ENCODE measurements at regions of chrX and their contacts with region 1.

Region 1: GRCh38 chrX:1925053-1925481 is 310.2 kb downstream of the ASMT start:
- DNase-seq: no peak
- H3K4me3 ChIP-seq: no peak overlapping the region
- H3K27ac ChIP-seq: no peak overlapping the region
- H3K4me1 ChIP-seq: no peaks in the 10 kb centered on the region
- H3K27me3 ChIP-seq: no peaks in the 10 kb centered on the region
- CTCF ChIP-seq: no peak
- POLR2A ChIP-seq: no peak

Region 2: GRCh38 chrX:1580735-1581531 is 344.1 kb before region 1 on chrX:
- intact Hi-C with region 1: no loop called
- DNase-seq: no peak
- H3K4me3 ChIP-seq: no peak overlapping the region
- H3K27ac ChIP-seq: no peak overlapping the region
- H3K4me1 ChIP-seq: no peaks in the 10 kb centered on the region
- H3K27me3 ChIP-seq: peaks cover 0 to 3% of the 10 kb centered on the region in 2 donors
- CTCF ChIP-seq: peak; percentile 29 to 52 (median 36)
- POLR2A ChIP-seq: no peak

Region 3: DNA sequence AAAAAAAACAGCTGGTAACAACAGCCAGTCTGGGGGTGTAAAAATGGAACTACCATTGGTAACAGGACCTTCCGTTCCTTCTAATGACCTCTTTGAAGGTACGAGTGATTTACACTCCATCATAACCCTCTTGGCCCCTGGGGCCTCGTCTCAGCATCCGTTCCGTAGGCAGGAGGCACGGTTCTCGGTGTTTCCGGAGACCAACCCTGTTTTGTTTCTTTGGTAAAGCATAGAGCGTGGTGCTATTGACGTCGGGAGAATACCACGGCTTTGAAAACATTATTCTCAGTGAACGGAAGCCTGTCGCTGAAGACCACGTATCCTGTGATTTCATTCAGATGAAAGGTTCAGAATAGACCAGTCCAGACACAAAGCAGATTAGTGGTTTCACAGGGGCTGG is 111.3 kb before region 1 on chrX:
- intact Hi-C with region 1: loop called (anchors 5 kb)
- DNase-seq: no peak
- H3K4me3 ChIP-seq: no peak overlapping the region
- H3K27ac ChIP-seq: no peak overlapping the region
- H3K4me1 ChIP-seq: no peaks in the 10 kb centered on the region
- H3K27me3 ChIP-seq: peaks cover 0 to 5% of the 10 kb centered on the region in 2 donors
- CTCF ChIP-seq: no peak
- POLR2A ChIP-seq: no peak

Region 4: DNA sequence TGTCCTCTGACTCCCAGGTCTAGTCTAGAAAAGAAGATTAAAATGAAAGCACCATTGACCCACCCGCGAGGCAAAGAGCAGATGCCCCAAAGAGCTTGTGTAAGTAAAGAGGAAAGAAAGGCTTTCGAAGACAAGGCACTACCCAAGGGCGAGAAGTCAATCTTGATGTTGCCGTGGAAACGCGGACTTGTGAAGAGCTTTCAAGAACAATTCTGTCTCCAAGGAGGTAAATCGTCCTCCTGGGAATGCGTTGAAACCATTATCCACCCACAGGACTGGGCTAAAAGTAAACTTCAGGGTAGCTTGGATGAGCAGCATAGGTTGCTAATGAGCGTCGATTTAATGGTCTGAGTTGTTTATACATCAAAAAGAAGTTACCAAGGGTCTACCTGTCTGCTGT is 386.4 kb after region 1 on chrX:
- intact Hi-C with region 1: no loop called
- DNase-seq: no peak
- H3K4me3 ChIP-seq: no peak overlapping the region
- H3K27ac ChIP-seq: no peak overlapping the region
- H3K4me1 ChIP-seq: no peaks in the 10 kb centered on the region
- H3K27me3 ChIP-seq: no peaks in the 10 kb centered on the region
- CTCF ChIP-seq: no peak
- POLR2A ChIP-seq: no peak

Measured in breast epithelium (tissue), 4 donors.